ENCODE measurements at regions of chr1 and their contacts with region 1.

Region 1: DNA sequence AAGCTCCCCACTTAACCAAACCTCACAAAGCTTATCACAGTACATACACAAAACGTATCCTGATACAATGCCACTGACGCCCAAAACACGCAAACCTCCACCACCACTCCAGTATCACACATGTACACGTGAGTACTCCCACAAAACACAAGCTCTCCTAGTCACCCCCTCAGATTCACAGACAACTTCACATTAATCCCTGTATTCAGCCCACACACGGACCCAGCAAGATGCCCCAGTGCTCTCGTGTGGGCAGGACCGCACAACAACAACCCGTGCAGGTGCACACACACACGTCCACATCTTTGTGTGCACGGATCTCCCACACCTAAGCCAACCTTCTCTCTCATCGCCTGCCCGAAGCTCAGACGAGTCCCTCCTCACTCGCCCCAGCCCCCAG is 17.6 kb downstream of the PADI1 start:
- DNase-seq: no peak
- H3K4me3 ChIP-seq: no peak overlapping the region
- CTCF ChIP-seq: no peak

Region 2: DNA sequence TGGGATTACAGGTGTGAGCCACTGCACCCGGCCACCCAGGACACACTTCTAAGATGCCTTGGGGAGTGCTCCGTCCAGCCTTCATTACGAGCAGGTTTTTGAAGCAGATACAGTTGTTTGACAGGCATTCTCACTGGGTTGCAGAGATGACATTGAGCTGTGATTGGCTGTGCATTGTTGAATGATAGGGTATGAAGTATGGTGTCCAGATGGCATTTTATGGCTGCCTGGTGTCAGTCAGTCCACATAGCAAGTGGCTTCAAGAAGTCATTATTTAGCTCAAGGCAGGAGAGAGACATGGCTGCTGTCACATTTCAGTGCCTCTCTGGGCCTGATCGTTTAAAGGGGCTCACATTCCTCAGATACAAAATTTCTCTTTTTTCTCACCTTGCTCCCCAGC is 88.5 kb before region 1 on chr1:
- in situ Hi-C with region 1: loop called (anchors 5 kb)
- DNase-seq: no peak
- H3K4me3 ChIP-seq: no peak overlapping the region
- CTCF ChIP-seq: no peak

Region 3: DNA sequence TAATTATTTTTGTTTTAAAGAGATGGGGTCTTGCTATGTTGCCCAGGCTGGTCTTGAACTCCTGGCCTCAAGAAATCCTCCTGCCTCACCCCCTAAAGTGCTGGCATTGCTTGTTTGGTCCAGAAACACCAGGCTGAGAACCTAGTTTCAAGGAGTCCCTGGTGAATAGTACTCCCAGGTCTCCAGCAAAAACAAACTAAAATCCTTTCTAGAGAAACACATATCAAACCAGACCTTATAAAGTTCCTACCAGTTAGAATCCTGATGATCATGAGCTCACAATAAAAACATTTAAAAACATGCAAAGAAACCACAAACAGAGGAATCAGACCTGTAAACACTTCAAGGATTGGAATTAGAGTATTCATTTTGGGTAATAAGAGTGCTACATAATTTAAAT is 52.0 kb before region 1 on chr1:
- in situ Hi-C with region 1: no loop called
- DNase-seq: peak; percentile 71
- H3K4me3 ChIP-seq: no peak overlapping the region
- CTCF ChIP-seq: no peak

Measured in astrocyte of the cerebellum (primary cell).